AG04449 (cell line): ENCODE measurements at regions of chr12 and their contacts with region 1.

Region 1: GRCh38 chr12:43282106-43282505 is 269.9 kb downstream of the ADAMTS20 start:
- DNase-seq: no peak
- H3K4me3 ChIP-seq: no peak overlapping the region
- CTCF ChIP-seq: peak; percentile 9

Region 2: GRCh38 chr12:42482445-42483237 is 799.5 kb before region 1 on chr12:
- CTCF ChIA-PET with region 1: interaction called, 65 read pairs
- POLR2A ChIA-PET with region 1: interaction called, 3 read pairs
- DNase-seq: no peak
- H3K4me3 ChIP-seq: peak overlapping the region; percentile 73
- CTCF ChIP-seq: peak; percentile 94

Region 3: DNA sequence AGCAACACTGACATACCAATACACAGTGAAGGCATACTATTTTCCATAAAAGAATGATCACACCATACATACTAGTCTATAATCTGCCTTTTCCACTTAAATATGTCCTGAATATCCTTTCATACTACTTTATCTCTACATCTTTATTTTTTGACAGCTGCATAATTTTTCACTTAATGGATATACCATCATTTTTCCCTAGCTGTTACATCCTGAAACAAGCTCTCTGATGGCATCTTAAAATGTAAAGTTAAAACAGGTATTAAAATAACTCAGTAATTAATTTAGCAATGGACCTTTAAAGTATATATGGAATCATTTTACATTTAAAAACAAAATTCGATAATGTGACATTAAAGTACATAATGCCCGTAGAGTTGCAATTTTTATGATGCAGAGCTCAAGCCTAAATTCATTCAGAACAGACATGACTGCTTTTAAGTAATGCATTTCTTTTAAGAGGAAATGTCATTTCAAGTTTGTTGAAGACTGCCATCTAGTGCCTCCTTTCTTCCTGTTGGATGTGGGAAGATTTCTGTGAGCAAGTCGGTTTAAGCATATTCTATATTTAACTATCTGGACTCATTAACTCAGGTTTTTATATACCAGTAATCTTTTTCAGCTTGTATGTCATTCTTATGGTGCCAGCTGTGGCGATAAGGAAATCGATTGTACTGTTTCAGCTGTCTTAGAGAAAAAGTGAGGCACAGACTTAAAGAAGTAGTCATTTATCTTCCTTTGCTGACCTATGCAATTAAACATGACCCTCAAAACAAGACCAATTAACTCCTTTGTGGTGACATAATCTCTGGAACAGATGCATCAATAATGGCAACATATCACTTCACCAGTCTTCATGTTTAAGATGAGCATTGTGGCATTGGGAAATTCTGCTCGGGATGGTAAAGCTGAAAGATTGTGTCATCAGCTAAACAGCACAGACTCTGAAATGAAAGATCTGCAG is 712.9 kb before region 1 on chr12:
- CTCF ChIA-PET with region 1: interaction called, 12 read pairs
- POLR2A ChIA-PET with region 1: no interaction called
- DNase-seq: peak; percentile 33
- H3K4me3 ChIP-seq: no peak overlapping the region
- CTCF ChIP-seq: peak; percentile 38

Region 4: DNA sequence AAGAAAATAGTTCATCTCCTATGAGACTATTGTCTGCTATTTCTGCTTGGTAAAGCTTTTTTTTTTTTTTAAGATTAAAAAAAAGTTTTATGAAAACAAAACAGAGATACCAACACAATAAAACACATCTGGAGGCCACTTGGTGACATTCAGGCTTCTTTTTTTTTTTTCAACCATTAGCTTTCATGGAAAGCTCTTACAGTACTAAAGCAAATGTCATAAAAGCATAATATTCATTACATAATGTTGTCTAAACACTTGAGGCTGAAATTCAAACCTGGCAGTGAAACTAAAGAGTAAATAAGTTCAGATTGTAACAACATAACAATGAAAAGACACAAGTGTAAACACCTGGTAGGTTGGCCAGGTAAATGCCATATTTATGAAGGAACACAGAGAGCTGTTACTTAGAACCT is 707.2 kb before region 1 on chr12:
- CTCF ChIA-PET with region 1: interaction called, 13 read pairs
- POLR2A ChIA-PET with region 1: no interaction called
- DNase-seq: no peak
- H3K4me3 ChIP-seq: no peak overlapping the region
- CTCF ChIP-seq: no peak

Region 5: GRCh38 chr12:42584651-42585111 is 697.4 kb before region 1 on chr12:
- CTCF ChIA-PET with region 1: interaction called, 10 read pairs
- POLR2A ChIA-PET with region 1: no interaction called
- DNase-seq: no peak
- H3K4me3 ChIP-seq: no peak overlapping the region
- CTCF ChIP-seq: no peak

Region 6: GRCh38 chr12:43255522-43256111 is 26.5 kb before region 1 on chr12:
- CTCF ChIA-PET with region 1: no interaction called
- POLR2A ChIA-PET with region 1: no interaction called
- DNase-seq: no peak
- H3K4me3 ChIP-seq: no peak overlapping the region
- CTCF ChIP-seq: no peak

Region 7: DNA sequence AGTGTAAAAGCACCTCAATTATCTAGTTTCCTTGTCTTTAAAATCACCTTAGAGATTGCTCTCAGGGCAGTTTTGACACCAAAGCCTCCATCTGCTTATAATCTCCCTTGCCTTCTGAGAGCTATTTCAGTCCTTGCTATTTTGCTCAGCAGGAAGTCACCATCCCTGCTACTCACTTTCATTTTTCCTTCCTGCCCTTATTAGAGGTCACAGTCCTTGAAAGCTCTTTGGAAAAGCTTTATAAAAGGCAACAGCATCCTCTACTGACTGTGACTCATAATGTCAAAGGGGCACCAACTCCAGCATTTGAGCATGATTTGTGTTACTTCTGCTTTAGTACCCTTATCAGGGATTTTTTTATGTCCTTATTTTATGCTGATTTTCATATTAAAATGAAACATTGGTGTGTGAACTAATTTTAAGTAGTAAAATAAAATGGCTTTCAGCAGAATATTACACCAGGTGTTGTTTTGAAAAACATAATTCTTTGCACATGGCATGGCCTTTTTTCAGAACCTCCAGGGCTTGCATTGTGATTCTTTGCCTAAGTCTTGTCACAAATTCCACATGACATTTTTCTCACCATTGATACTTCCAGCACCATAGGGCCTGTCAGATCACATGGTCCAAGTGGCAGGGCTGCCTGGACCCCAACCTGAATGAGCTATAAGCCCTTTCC is 56.9 kb after region 1 on chr12:
- CTCF ChIA-PET with region 1: interaction called, 101 read pairs
- POLR2A ChIA-PET with region 1: no interaction called
- DNase-seq: no peak
- H3K4me3 ChIP-seq: no peak overlapping the region
- CTCF ChIP-seq: peak; percentile 57